ENCODE measurements at regions of chr6 and their contacts with region 1.

Region 1: GRCh38 chr6:49625140-49625539 is 11.5 kb downstream of the RHAG start:
- DNase-seq: no peak
- H3K4me3 ChIP-seq: no peak overlapping the region
- H3K27ac ChIP-seq: no peak overlapping the region
- H3K4me1 ChIP-seq: peaks cover 0 to 8% (median 3%) of the 10 kb centered on the region in 4 experiments
- H3K27me3 ChIP-seq: no peaks in the 10 kb centered on the region

Region 2: DNA sequence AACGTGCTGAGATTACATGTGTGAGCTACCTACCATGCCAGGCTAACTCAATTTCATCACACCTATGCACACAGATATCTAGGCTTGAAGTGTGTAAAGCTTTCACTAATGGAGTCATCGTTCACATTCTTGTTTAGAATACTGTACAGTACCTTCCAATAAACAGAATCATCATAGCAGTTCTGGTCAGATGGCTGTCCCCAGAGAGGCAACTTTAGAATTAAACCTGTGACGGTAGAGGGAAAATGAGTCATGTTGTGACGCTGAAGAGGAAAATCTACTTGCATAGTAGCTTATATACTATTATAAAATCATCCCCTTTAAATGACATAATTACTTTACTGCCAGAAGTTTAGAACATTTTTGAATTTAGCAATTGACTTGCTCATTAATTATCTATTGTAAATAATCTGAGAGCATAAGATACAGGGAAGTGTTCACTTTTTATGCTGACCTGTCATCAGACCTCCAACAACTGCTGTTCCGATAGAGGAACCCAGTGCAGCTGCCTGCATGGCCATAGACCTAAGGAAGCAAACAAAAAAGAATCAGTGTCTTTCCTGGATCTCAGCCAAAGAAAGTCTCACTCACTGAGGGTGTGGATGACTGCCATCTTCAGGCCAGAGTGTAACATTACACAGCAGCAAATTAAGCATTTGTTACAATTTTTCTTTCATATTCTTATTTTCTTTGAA is 18.3 kb before region 1 on chr6:
- CTCF ChIA-PET with region 1: interaction called, 10 read pairs
- POLR2A ChIA-PET with region 1: no interaction called
- DNase-seq: peak; percentile 85 to 95 (median 92)
- H3K4me3 ChIP-seq: no peak overlapping the region
- H3K27ac ChIP-seq: no peak overlapping the region
- H3K4me1 ChIP-seq: no peaks in the 10 kb centered on the region
- H3K27me3 ChIP-seq: peaks cover 0 to 3% (median 0%) of the 10 kb centered on the region in 5 experiments

Region 3: DNA sequence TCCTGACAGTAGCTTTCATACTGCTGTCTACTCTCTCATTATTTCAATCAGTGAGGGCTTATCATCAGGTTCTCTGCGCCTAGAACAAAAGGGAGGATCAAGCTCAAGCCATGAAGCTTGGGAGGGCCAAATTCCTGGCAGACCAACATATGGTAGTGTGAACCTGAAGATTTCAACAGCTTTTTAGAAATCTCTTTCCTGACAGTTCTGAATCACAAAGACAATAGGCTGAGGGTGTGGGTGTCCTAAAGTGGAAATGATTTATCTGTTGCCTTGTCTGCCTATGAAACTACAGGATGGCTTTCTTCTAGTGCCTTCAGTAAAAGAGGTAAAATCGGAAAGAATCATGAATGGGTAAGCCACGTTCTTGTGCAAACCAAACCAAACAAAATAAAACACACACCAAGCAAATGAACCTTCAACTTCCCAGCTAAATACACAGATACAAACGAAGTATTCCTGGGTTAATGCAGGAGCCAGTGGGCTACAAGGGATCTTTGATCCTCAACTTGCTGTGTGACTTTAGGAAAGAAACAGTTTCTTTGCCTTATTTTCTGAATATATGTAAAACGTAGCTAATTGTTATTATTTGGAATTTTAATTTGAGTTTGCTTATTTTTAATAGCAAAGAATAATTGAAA is 14.2 kb after region 1 on chr6:
- CTCF ChIA-PET with region 1: interaction called, 11 read pairs
- POLR2A ChIA-PET with region 1: interaction called, 3 read pairs
- DNase-seq: no peak
- H3K4me3 ChIP-seq: no peak overlapping the region
- H3K27ac ChIP-seq: no peak overlapping the region
- H3K4me1 ChIP-seq: no peaks in the 10 kb centered on the region
- H3K27me3 ChIP-seq: no peaks in the 10 kb centered on the region

Region 4: GRCh38 chr6:49849213-49849907 is 224.2 kb after region 1 on chr6:
- CTCF ChIA-PET with region 1: interaction called, 79 read pairs
- POLR2A ChIA-PET with region 1: no interaction called
- DNase-seq: peak; percentile 61 to 84 (median 83)
- H3K4me3 ChIP-seq: no peak overlapping the region
- H3K27ac ChIP-seq: no peak overlapping the region
- H3K4me1 ChIP-seq: no peaks in the 10 kb centered on the region
- H3K27me3 ChIP-seq: no peaks in the 10 kb centered on the region

Region 5: DNA sequence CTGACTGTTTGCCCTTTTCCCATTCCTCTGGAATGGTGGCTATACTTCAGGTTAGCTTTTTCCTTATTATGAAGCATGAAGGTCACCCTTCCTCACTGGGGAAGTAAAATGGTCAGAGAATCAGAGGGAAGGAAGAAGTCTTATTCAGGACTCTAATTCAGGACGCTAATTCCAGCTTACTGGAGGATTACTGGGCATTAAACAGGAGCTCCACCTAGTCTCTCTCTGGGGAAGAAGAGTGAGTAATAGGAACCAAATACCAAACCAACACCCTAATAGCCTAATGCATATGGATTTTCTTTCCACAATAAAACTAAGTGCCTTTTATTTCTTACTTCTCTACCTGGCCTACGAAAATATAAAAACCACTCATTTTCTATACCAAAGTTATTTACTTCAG is 231.1 kb after region 1 on chr6:
- CTCF ChIA-PET with region 1: interaction called, 79 read pairs
- POLR2A ChIA-PET with region 1: no interaction called
- DNase-seq: no peak
- H3K4me3 ChIP-seq: no peak overlapping the region
- H3K27ac ChIP-seq: no peak overlapping the region
- H3K4me1 ChIP-seq: peaks cover 0 to 12% (median 2%) of the 10 kb centered on the region in 4 experiments
- H3K27me3 ChIP-seq: no peaks in the 10 kb centered on the region